ENCODE measurements at regions of chr17 and their contacts with region 1.

Region 1: DNA sequence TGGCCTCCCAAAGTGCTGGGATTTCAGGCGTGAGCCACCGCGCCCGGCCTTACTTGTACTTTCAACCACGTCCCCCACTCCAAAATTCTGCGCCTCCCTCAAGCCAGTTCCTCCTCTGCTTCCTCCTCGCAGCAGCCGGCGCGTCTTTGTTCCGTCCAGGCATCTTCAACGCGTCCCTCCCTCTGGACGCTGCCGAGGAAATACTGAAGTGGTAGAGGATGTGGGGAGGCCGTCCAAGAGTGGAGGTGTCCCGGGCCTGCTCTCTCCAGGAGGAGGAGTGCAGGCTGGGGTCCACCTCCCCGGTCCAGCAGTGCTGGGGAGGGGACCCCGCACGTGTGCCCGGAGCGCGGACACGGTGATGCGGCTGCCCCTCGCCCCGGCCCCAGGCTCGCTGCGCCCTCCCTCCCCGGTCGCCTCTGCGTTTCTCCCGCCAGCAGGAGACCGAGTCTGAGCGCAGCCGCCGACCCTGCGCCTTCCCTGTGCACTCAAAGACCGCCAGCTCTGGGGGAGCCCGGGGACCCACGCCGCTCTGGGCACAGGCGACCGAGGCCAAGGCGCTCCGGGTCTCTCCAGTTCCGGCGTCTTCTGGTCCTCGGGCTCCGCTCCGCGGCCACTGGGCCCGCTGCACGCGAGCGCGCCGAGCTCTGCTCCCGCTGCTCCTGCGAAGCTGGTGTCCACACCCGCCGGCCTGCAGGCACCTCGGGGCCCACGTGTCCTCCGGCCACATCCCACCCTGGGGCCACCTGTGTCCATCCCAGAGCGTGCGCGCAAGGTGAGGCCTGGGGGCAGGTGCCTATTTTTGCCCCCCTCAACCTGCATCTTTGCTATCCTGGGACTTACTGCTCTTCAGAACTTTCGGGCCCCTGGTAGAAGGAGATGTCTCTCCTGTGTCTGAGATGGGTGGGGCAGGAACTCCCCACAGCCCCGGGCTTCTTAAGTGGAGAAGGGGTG is 31.7 kb downstream of the OSBPL7 start:
- DNase-seq: peak in 1 of 2 donors; percentile 56
- ATAC-seq: peak; percentile 84 to 95 (median 91)
- H3K4me3 ChIP-seq: peak overlapping the region; percentile 10 to 52 (median 42)
- H3K27ac ChIP-seq: no peak overlapping the region
- H3K4me1 ChIP-seq: peaks cover 0 to 11% (median 9%) of the 10 kb centered on the region in 9 donors
- H3K27me3 ChIP-seq: peaks cover 0 to 96% (median 89%) of the 10 kb centered on the region in 7 donors
- CTCF ChIP-seq: peak in 8 of 9 donors; percentile 31 to 70 (median 64)

Region 2: DNA sequence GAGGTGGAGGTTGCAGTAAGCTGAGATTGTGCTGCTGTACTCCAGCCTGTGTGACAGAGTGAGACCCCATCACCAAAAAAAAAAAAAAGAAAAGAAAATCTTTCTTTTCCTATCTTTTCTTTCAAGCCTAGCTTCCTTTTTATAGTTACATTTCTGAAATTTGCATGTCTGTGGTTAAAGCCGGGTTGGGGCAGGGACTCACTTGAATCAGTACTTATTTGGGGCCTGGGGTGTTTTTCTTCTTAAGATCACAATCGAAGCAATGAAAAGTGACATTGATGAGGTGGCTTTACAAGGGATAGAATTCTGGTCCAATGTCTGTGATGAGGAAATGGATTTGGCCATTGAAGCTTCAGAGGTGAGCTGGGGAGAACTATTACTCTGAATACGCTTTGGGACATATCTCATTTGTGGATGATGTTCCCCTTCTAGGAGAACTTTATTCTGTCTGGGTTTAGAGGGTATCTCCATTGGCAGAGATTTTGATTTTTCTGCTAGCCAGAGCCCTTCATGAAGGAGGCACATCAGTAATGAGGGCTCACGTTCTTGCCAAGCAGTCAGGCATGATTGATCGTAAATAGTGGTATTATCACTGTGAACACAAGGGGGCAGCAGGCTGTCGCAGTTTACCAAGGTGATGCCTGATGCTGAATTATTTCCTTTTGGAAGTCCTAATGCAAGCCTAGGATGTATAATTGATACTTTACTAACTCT is 125.8 kb before region 1 on chr17:
- intact Hi-C with region 1: loop called in 2 of 10 experiments (anchors 5 to 10 kb)
- DNase-seq: peak in 1 of 2 donors; percentile 47
- ATAC-seq: peak; percentile 39 to 86 (median 74)
- H3K4me3 ChIP-seq: no peak overlapping the region
- H3K27ac ChIP-seq: peak overlapping the region in 1 of 10 donors; percentile 41
- H3K4me1 ChIP-seq: peaks cover 0 to 19% (median 0%) of the 10 kb centered on the region in 9 donors
- H3K27me3 ChIP-seq: no peaks in the 10 kb centered on the region
- CTCF ChIP-seq: peak; percentile 56 to 85 (median 79)

Region 3: GRCh38 chr17:47670081-47670480 is 119.8 kb before region 1 on chr17:
- intact Hi-C with region 1: loop called in 3 of 10 experiments (anchors 5 to 10 kb)
- DNase-seq: no peak
- ATAC-seq: no peak
- H3K4me3 ChIP-seq: no peak overlapping the region
- H3K27ac ChIP-seq: peak overlapping the region in 1 of 10 donors; percentile 76
- H3K4me1 ChIP-seq: peaks cover 0 to 14% (median 0%) of the 10 kb centered on the region in 9 donors
- H3K27me3 ChIP-seq: no peaks in the 10 kb centered on the region
- CTCF ChIP-seq: no peak

Region 4: GRCh38 chr17:47698749-47699535 is 90.9 kb before region 1 on chr17:
- intact Hi-C with region 1: loop called in 3 of 10 experiments (anchors 10 kb)
- DNase-seq: peak; percentile 61 to 71
- ATAC-seq: no peak
- H3K4me3 ChIP-seq: no peak overlapping the region
- H3K27ac ChIP-seq: peak overlapping the region in 1 of 10 donors; percentile 10
- H3K4me1 ChIP-seq: peaks cover 0 to 39% (median 22%) of the 10 kb centered on the region in 9 donors
- H3K27me3 ChIP-seq: no peaks in the 10 kb centered on the region
- CTCF ChIP-seq: peak in 8 of 9 donors; percentile 92 to 98 (median 94)

Region 5: GRCh38 chr17:47708863-47709541 is 80.9 kb before region 1 on chr17:
- intact Hi-C with region 1: loop called in 2 of 10 experiments (anchors 10 kb)
- DNase-seq: peak in 1 of 2 donors; percentile 66
- ATAC-seq: peak; percentile 44 to 79 (median 62)
- H3K4me3 ChIP-seq: peak overlapping the region in 8 of 10 donors; percentile 21 to 47 (median 36)
- H3K27ac ChIP-seq: peak overlapping the region in 5 of 10 donors; percentile 22 to 71 (median 48)
- H3K4me1 ChIP-seq: peaks cover 5 to 50% (median 30%) of the 10 kb centered on the region in 9 donors
- H3K27me3 ChIP-seq: peaks cover 0 to 7% (median 0%) of the 10 kb centered on the region in 7 donors
- CTCF ChIP-seq: no peak

Region 6: GRCh38 chr17:47751471-47751870 is 38.4 kb before region 1 on chr17:
- intact Hi-C with region 1: no loop called
- DNase-seq: no peak
- ATAC-seq: no peak
- H3K4me3 ChIP-seq: no peak overlapping the region
- H3K27ac ChIP-seq: no peak overlapping the region
- H3K4me1 ChIP-seq: no peaks in the 10 kb centered on the region
- H3K27me3 ChIP-seq: peaks cover 0 to 86% (median 59%) of the 10 kb centered on the region in 7 donors
- CTCF ChIP-seq: no peak